Common myeloid progenitor, CD34-positive (primary cell): ENCODE measurements at regions of chr7 and their contacts with region 1.

Region 1: GRCh38 chr7:1512781-1513656 is 8.8 kb upstream of the INTS1 start:
- DNase-seq: peak; percentile 89 to 97 (median 97)
- H3K4me3 ChIP-seq: peak overlapping the region in 3 of 7 experiments; percentile 26 to 54 (median 50)
- H3K27ac ChIP-seq: peak overlapping the region; percentile 74 to 88
- H3K4me1 ChIP-seq: peaks cover 0 to 83% (median 76%) of the 10 kb centered on the region in 4 experiments
- H3K27me3 ChIP-seq: no peaks in the 10 kb centered on the region

Region 2: GRCh38 chr7:1526251-1526763 is 13.3 kb after region 1 on chr7:
- CTCF ChIA-PET with region 1: interaction called, 150 read pairs
- POLR2A ChIA-PET with region 1: interaction called, 6 read pairs
- DNase-seq: no peak
- H3K4me3 ChIP-seq: no peak overlapping the region
- H3K27ac ChIP-seq: no peak overlapping the region
- H3K4me1 ChIP-seq: peaks cover 0 to 26% (median 18%) of the 10 kb centered on the region in 4 experiments
- H3K27me3 ChIP-seq: no peaks in the 10 kb centered on the region

Region 3: GRCh38 chr7:1532483-1533424 is 19.7 kb after region 1 on chr7:
- CTCF ChIA-PET with region 1: interaction called, 150 read pairs
- POLR2A ChIA-PET with region 1: interaction called, 27 read pairs
- DNase-seq: peak; percentile 64 to 89 (median 85)
- H3K4me3 ChIP-seq: peak overlapping the region; percentile 64 to 96 (median 81)
- H3K27ac ChIP-seq: peak overlapping the region; percentile 58 to 87
- H3K4me1 ChIP-seq: peaks cover 2 to 58% (median 48%) of the 10 kb centered on the region in 4 experiments
- H3K27me3 ChIP-seq: no peaks in the 10 kb centered on the region

Region 4: DNA sequence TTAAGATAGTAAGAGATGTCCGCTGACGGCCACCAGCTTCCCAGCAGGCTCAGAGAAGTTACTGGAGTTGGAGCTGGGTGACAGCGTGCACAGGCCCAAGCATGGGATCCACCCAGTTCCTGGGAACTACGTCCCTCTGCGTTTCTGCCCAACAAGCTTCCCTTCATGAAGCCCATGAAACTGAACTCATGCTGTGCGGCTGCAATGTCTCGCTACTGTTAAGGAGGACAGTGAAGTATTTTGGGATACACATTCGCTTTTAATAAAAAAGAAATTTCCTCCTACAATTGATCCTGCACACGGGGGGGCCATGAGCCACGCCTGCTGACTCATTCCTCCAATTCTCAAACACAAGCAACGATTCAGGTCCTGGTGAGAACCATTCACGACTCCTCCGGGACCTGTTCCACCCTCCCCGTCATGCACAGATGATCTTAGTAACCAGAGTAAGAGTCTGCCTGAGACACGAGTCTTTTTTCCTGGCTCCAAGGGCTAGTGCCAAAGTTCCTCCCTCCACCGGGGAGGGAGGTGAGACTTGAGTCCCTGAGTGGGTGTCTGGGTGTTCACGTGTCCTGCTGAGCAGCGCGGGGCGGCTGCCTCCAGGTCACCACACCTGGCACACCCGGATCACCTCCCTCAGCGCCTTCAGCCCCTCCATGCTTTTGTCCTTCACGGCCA is 54.2 kb after region 1 on chr7:
- CTCF ChIA-PET with region 1: no interaction called
- POLR2A ChIA-PET with region 1: no interaction called
- DNase-seq: no peak
- H3K4me3 ChIP-seq: no peak overlapping the region
- H3K27ac ChIP-seq: no peak overlapping the region
- H3K4me1 ChIP-seq: peaks cover 4 to 40% (median 38%) of the 10 kb centered on the region in 4 experiments
- H3K27me3 ChIP-seq: no peaks in the 10 kb centered on the region

Region 5: GRCh38 chr7:1593091-1593866 is 80.3 kb after region 1 on chr7:
- CTCF ChIA-PET with region 1: no interaction called
- POLR2A ChIA-PET with region 1: no interaction called
- DNase-seq: peak in 2 of 3 donors; percentile 9 to 17
- H3K4me3 ChIP-seq: no peak overlapping the region
- H3K27ac ChIP-seq: no peak overlapping the region
- H3K4me1 ChIP-seq: peaks cover 0 to 15% (median 8%) of the 10 kb centered on the region in 4 experiments
- H3K27me3 ChIP-seq: peaks cover 0 to 46% (median 11%) of the 10 kb centered on the region in 5 experiments

Region 6: GRCh38 chr7:1611708-1612241 is 98.8 kb after region 1 on chr7:
- CTCF ChIA-PET with region 1: no interaction called
- POLR2A ChIA-PET with region 1: no interaction called
- DNase-seq: no peak
- H3K4me3 ChIP-seq: no peak overlapping the region
- H3K27ac ChIP-seq: no peak overlapping the region
- H3K4me1 ChIP-seq: no peaks in the 10 kb centered on the region
- H3K27me3 ChIP-seq: peaks cover 0 to 3% (median 0%) of the 10 kb centered on the region in 5 experiments